ENCODE measurements at regions of chr9 and their contacts with region 1.

Region 1: GRCh38 chr9:35071814-35072460 is 488 bp downstream of the VCP start:
- DNase-seq: peak; percentile 72
- H3K4me3 Mint-ChIP-seq: peak overlapping the region; percentile 95
- H3K27ac Mint-ChIP-seq: peak overlapping the region; percentile 92
- H3K4me1 Mint-ChIP-seq: peaks cover 55% of the 10 kb centered on the region
- H3K27me3 Mint-ChIP-seq: no peaks in the 10 kb centered on the region

Region 2: DNA sequence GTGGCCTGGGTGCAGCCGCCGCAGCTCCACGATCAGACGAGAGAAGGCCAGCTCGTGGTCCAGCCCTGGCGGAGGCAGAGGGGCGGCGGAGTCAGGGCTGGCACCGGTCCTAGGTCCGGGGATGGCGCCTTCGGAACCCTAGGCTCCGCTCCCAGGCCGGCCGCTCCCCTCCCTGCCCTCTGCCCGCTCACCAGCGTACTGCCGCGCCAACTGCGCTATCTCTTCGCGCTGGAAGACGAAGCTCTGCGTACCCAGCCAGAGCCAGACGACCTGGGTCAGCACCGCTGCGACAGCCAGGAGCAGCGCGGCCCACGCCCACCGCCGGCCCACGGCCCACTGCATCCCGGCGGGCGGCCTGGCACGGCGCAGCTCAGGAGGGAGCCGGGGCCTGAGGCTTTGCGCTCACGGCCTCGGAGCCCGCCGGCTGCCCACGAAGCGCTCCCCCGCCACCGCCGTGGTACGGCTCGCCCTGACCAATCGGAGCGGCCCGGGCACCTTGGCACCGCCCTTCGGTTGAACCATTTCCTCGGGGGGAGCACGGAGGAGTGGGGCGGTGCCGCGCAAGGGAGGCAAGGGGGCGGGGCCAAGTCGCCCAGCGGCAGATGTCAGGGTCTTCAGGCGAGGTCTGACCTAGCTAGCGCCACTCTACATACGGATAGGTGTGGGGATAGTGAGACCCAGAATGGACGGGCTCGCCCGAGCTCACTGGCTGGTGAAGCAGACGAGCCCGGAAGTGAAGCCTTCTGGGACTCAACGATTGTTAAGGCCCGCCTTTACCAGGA is 434.4 kb before region 1 on chr9 and contains the start of gene SIGMAR1:
- intact Hi-C with region 1: loop called (anchors 10 kb)
- DNase-seq: peak; percentile 94
- H3K4me3 Mint-ChIP-seq: peak within 1 kb of the TSS; percentile 97
- H3K27ac Mint-ChIP-seq: peak within 1 kb of the TSS; percentile 88
- H3K4me1 Mint-ChIP-seq: peaks cover 39% of the 10 kb centered on the region
- H3K27me3 Mint-ChIP-seq: no peaks in the 10 kb centered on the region
- total RNA-seq, gene SIGMAR1: 128 and 130 TPM in 2 replicates

Region 3: DNA sequence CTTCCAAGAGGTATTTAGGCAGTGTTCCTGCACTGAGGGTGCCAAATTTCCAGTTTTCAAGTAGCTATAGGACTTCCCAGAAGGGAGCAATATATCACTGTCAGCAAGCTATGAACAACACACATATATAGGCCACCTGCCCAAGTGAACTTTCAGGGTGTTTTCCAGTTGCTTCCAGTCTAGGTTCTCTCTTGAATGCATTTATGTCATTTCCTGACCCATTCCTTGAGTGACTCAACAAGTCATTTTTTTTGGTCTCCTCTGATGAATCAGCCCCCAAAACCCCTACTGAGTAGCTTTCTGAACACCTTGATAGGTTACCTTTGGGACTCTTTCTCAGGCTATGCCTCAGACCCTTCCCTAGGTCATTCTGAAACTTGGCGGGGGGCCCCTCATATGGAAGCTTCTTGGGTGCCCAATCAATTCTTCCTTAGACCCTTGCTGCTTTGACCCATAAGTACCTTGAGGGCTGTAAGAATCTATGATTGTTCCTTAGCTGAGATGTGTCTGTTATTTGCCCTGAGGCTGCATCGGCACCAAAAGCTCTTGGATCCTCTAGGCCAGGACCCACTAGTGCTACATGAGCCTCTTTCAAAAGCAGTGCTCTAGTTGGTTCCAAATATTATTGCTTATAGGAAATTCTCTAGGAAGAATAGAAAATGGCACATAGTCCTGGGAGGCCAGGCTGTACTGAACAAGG is 70.0 kb before region 1 on chr9:
- intact Hi-C with region 1: no loop called
- DNase-seq: no peak
- H3K4me3 Mint-ChIP-seq: peak overlapping the region; percentile 43
- H3K27ac Mint-ChIP-seq: peak overlapping the region; percentile 73
- H3K4me1 Mint-ChIP-seq: peaks cover 39% of the 10 kb centered on the region
- H3K27me3 Mint-ChIP-seq: no peaks in the 10 kb centered on the region

Region 4: DNA sequence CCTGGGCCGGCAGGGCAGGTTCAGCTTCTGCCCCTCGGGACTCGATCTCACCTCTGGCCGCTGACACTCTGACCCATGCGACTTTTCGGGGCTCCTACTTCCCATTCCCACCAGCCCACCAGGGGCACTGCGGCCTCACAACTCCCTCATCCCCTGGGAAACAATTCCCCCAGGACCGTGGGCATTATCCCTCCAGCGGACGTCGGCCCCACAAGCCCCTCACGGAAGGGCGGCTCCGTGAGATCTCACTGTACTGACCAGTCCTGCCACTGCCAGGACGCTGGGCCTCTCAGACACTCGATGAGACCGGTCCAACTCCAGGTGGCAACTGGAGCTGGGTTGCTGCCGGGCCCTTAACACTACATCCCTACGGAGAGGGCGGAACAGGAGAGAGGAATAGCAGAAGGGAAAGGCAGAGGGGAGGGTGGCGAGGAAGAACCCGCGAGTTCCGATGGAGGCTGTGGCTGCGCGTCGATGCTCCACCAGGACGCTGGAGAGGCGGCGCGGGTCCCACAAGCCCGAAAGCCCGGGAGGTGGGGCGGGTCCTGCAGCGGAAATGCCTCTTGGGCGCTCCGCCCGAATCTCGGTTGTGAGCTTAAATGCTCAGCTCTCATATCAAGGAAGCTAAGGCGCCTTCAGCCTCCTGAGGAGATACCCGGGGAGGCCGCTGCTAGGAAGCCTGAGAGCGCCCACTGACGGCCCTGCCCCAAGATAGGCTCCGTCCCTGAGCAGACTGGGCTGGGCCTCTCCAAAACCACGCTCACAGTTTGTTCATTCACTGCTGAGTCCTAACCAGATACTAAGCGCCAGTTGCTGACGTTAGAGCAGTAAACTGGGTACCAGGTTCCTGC is 35.9 kb before region 1 on chr9:
- intact Hi-C with region 1: loop called (anchors 2 kb)
- DNase-seq: peak; percentile 57
- H3K4me3 Mint-ChIP-seq: peak overlapping the region; percentile 57
- H3K27ac Mint-ChIP-seq: peak overlapping the region; percentile 56
- H3K4me1 Mint-ChIP-seq: peaks cover 6% of the 10 kb centered on the region
- H3K27me3 Mint-ChIP-seq: no peaks in the 10 kb centered on the region

Region 5: GRCh38 chr9:35056571-35057270 is 15.2 kb before region 1 on chr9:
- intact Hi-C with region 1: loop called (anchors 2 kb)
- DNase-seq: no peak
- H3K4me3 Mint-ChIP-seq: no peak overlapping the region
- H3K27ac Mint-ChIP-seq: peak overlapping the region; percentile 65
- H3K4me1 Mint-ChIP-seq: peaks cover 8% of the 10 kb centered on the region
- H3K27me3 Mint-ChIP-seq: no peaks in the 10 kb centered on the region

Region 6: DNA sequence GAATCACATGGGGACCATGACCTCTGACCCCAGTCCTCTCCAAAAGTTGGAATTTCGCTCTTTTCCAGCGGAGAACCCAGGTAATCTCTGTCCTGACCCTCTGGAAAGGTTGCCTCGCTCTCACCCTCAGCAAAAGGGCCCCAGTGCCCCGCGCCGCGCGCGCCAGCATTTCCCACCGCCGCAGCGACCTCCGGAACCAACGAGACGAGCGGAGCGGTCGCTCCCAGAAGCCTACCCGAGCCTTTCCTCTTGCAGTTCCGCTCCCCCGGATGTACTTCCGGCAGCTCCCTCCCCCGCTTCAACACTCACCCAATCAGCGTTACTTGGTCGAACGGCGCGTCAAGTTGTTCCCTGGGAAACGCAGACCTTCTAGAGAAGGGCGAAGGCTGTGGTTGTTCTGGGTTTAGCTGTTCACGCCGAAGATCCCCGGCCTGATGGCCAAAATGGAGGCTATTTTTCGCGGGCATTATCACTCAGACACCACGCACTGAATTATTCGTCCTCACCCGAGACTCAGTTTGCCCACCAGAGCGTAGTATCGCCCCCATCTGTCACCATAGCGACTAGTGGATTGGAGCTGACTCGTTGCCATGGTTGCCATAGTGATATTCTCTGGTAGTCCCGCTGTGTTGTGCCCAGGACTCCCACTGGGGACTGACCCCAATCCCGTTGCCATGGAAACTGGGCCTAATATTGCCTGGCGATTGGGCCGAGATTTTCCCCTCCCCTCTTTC is 31.2 kb after region 1 on chr9 and contains the start of gene STOML2:
- intact Hi-C with region 1: loop called (anchors 1 kb)
- DNase-seq: peak; percentile 89
- H3K4me3 Mint-ChIP-seq: peak within 1 kb of the TSS; percentile 87
- H3K27ac Mint-ChIP-seq: peak within 1 kb of the TSS; percentile 88
- H3K4me1 Mint-ChIP-seq: peaks cover 28% of the 10 kb centered on the region
- H3K27me3 Mint-ChIP-seq: no peaks in the 10 kb centered on the region
- total RNA-seq, gene STOML2: 250 and 261 TPM in 2 replicates

Region 7: GRCh38 chr9:35111001-35111933 is 39.3 kb after region 1 on chr9:
- intact Hi-C with region 1: loop called (anchors 1 kb)
- DNase-seq: peak; percentile 94
- H3K4me3 Mint-ChIP-seq: peak overlapping the region; percentile 77
- H3K27ac Mint-ChIP-seq: peak overlapping the region; percentile 90
- H3K4me1 Mint-ChIP-seq: peaks cover 61% of the 10 kb centered on the region
- H3K27me3 Mint-ChIP-seq: no peaks in the 10 kb centered on the region